Natural killer cell (primary cell): ENCODE measurements at regions of chr12 and their contacts with region 1.

Region 1: DNA sequence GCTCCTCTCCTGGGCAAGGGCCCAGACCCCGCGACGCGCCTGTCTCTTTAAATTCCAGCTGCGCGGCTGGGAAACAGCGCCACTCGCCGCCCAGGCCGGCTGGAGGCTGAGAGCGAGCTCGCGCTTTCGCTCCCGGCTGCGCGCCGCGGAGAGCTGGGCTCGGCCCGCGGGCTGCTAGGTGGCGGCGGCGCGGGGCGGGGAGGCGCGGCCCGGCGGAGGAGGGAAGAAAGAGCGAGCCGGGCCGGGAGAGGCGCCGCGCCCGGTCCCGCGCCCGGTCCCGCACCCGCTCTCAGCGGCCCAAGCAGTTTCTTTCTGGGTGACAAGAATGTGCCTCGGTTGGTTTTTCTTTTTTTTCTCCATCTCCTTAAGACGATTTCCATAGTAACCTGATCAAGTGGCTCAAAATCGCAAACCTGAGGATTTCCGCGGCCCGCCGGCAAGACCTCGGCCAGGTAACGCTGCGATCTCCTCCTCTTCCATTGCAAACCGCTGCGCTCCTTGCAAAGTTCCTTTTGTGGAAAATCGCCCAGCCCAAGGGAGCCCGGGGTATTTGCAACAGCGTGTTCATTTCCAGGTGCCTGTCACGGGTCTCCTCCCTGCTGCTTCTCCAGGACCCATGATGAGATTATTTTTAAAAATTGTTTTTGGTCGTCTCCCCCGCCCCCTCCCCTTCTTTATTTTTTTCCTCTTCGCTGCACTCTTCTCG is 259.5 kb upstream of the E2F7 start:
- DNase-seq: no peak
- ATAC-seq: peak in 1 of 3 donors; percentile 54
- H3K4me3 ChIP-seq: no peak overlapping the region
- H3K4me3 Mint-ChIP-seq: peak overlapping the region; percentile 31
- H3K27ac ChIP-seq: no peak overlapping the region
- H3K27ac Mint-ChIP-seq: no peak overlapping the region
- H3K4me1 ChIP-seq: peaks cover 3% of the 10 kb centered on the region
- H3K4me1 Mint-ChIP-seq: peaks cover 6% of the 10 kb centered on the region in 2 donors
- H3K27me3 ChIP-seq: peaks cover 4% of the 10 kb centered on the region
- H3K27me3 Mint-ChIP-seq: peaks cover 37 to 66% of the 10 kb centered on the region in 2 donors
- CTCF ChIP-seq: no peak

Region 2: DNA sequence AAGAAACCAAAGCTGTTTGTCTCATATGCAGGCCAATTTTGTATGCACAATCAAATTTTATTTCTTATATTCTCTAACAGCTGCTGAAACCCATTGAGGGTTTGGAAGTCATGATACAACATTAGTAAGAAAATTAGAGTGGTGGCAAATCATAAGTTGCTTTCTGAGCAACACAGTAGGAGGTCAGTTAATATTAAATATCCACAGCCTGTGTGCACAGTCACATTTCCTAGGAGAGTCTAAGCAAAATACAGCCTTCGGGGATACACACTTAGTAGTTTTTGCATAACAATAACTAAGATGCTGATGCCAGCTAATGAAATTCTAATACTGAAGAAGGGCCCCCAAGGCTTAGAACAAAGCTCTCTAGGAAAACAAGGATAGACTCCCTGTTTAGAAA is 50.0 kb before region 1 on chr12:
- intact Hi-C with region 1: no loop called
- DNase-seq: no peak
- ATAC-seq: no peak
- H3K4me3 ChIP-seq: no peak overlapping the region
- H3K4me3 Mint-ChIP-seq: no peak overlapping the region
- H3K27ac ChIP-seq: no peak overlapping the region
- H3K27ac Mint-ChIP-seq: no peak overlapping the region
- H3K4me1 ChIP-seq: no peaks in the 10 kb centered on the region
- H3K4me1 Mint-ChIP-seq: no peaks in the 10 kb centered on the region
- H3K27me3 ChIP-seq: no peaks in the 10 kb centered on the region
- H3K27me3 Mint-ChIP-seq: no peaks in the 10 kb centered on the region
- CTCF ChIP-seq: no peak

Region 3: DNA sequence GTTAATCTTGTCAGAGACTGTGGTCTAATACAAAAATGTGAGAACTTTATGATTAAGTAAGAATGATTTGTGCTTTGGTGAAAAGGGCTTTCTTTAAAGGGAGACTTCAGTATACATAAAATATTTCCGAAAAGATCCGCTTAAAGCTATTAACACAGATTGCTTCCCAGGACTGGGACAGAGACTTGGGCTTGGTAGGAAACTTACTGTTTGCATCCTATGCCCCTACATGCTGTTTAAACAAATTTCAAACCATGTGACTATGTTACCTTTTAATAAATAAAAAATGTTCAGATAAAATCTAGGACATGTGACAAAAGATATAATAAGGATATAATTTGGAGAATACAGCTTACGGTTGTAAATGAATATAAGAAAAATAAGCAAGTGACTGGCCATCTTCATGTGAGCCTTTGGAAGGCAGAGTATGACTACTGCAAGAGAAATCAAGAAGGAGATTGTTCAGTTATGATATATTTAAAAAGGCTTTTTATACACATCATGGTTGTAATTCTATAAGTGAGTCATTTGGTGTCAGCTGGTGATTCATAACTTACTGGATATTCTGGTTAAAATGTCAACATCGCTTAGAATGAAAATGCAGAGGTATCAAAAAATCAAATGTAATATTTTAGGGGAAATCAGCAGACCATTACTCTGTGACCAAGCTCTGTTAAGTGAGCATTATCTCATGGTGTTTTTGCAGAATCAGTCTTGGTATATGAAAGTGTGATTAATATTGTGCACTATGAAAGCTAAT is 24.8 kb before region 1 on chr12:
- intact Hi-C with region 1: loop called (anchors 1 kb)
- DNase-seq: no peak
- ATAC-seq: no peak
- H3K4me3 ChIP-seq: no peak overlapping the region
- H3K4me3 Mint-ChIP-seq: no peak overlapping the region
- H3K27ac ChIP-seq: no peak overlapping the region
- H3K27ac Mint-ChIP-seq: no peak overlapping the region
- H3K4me1 ChIP-seq: no peaks in the 10 kb centered on the region
- H3K4me1 Mint-ChIP-seq: no peaks in the 10 kb centered on the region
- H3K27me3 ChIP-seq: no peaks in the 10 kb centered on the region
- H3K27me3 Mint-ChIP-seq: no peaks in the 10 kb centered on the region
- CTCF ChIP-seq: no peak